Naive thymus-derived CD8-positive, alpha-beta T cell (primary cell): ENCODE measurements at regions of chr22 and their contacts with region 1.

Region 1: GRCh38 chr22:41940832-41941765 is 5.9 kb downstream of the CENPM start:
- DNase-seq: peak; percentile 76 to 93 (median 85)
- ATAC-seq: peak; percentile 63
- H3K4me3 Mint-ChIP-seq: peak overlapping the region; percentile 43 to 92 (median 76)
- H3K27ac Mint-ChIP-seq: peak overlapping the region; percentile 97 to 100 (median 100)
- H3K4me1 Mint-ChIP-seq: peaks cover 17 to 55% (median 33%) of the 10 kb centered on the region in 4 donors
- H3K27me3 Mint-ChIP-seq: no peaks in the 10 kb centered on the region

Region 2: GRCh38 chr22:41697126-41697775 is 243.8 kb before region 1 on chr22:
- POLR2A ChIA-PET with region 1: interaction called, 24 read pairs
- DNase-seq: peak; percentile 70 to 95 (median 85)
- ATAC-seq: peak; percentile 72 to 79
- H3K4me3 Mint-ChIP-seq: peak overlapping the region; percentile 40 to 84 (median 74)
- H3K27ac Mint-ChIP-seq: peak overlapping the region in 9 of 10 donors; percentile 61 to 93 (median 81)
- H3K4me1 Mint-ChIP-seq: peaks cover 11 to 13% (median 12%) of the 10 kb centered on the region in 4 donors
- H3K27me3 Mint-ChIP-seq: peaks cover 0 to 2% (median 0%) of the 10 kb centered on the region in 5 donors

Region 3: GRCh38 chr22:41780746-41781505 is 160.2 kb before region 1 on chr22:
- POLR2A ChIA-PET with region 1: interaction called, 10 read pairs
- DNase-seq: peak; percentile 69 to 98 (median 92)
- ATAC-seq: peak; percentile 95
- H3K4me3 Mint-ChIP-seq: peak overlapping the region; percentile 80 to 93 (median 87)
- H3K27ac Mint-ChIP-seq: peak overlapping the region; percentile 98 to 100 (median 99)
- H3K4me1 Mint-ChIP-seq: peaks cover 29 to 69% (median 56%) of the 10 kb centered on the region in 4 donors
- H3K27me3 Mint-ChIP-seq: no peaks in the 10 kb centered on the region

Region 4: DNA sequence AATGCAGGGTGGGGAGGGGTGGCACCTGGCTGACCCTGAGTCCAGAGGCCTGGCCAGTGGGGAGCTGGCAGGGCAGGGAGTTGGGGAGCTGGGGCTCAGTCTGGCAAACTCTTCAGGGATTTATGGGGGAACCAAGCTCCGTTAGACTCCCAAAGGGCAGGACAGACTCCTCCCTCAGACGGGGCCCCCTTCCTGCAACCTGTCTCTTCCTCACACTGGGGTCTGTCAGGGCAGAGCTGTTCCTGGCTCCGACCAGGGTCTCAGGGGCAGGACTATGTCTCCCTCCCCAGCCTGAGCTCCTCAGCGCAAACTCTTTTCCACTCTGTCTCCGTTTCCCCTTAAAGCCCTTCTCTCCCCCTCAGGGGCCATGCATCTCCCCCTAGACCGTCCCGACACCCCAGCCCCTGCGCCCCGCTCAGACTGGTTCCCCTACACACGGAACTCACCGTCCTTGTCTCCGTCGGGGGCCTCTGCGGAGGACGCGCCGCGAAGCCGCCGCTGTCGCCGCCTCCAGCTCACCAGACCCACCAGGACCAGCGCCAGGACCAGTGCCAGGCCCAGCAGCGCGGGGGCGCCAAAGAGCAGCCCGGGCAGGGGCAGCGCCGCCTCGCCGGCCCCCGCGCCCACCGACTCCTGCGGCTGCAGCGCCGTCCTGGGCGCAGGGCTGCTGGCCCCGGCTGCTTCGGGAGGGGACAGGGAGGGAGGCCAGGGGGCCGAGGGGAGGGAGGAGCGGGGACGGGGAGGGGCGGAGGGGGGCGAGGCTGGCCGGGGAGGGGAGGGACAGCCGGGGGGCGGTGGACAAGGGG is 15.2 kb before region 1 on chr22:
- POLR2A ChIA-PET with region 1: interaction called, 68 read pairs
- DNase-seq: peak; percentile 63 to 88 (median 74)
- ATAC-seq: peak; percentile 83
- H3K4me3 Mint-ChIP-seq: peak overlapping the region; percentile 69 to 89 (median 81)
- H3K27ac Mint-ChIP-seq: peak overlapping the region in 8 of 10 donors; percentile 44 to 88 (median 67)
- H3K4me1 Mint-ChIP-seq: peaks cover 14 to 43% (median 29%) of the 10 kb centered on the region in 4 donors
- H3K27me3 Mint-ChIP-seq: peaks cover 0 to 3% (median 2%) of the 10 kb centered on the region in 5 donors

Region 5: GRCh38 chr22:41976401-41976901 is 35.4 kb after region 1 on chr22:
- POLR2A ChIA-PET with region 1: no interaction called
- DNase-seq: peak in 6 of 10 donors; percentile 21 to 49 (median 32)
- ATAC-seq: peak; percentile 69 to 83
- H3K4me3 Mint-ChIP-seq: peak overlapping the region; percentile 47 to 80 (median 72)
- H3K27ac Mint-ChIP-seq: no peak overlapping the region
- H3K4me1 Mint-ChIP-seq: peaks cover 6 to 9% (median 7%) of the 10 kb centered on the region in 4 donors
- H3K27me3 Mint-ChIP-seq: peaks cover 23 to 63% (median 36%) of the 10 kb centered on the region in 5 donors